H1 (cell line): ENCODE measurements at regions of chr5 and their contacts with region 1.

Region 1: GRCh38 chr5:129767906-129768380 is 20.0 kb downstream of the MINAR2 start:
- DNase-seq: peak; percentile 25 to 76
- H3K4me3 ChIP-seq: no peak overlapping the region
- H3K27ac ChIP-seq: no peak overlapping the region
- H3K4me1 ChIP-seq: peaks cover 0 to 7% (median 0%) of the 10 kb centered on the region in 4 experiments; a peak in 2 of 7 replicates
- H3K27me3 ChIP-seq: no peaks in the 10 kb centered on the region; a peak in 1 of 7 replicates
- CTCF ChIP-seq: peak in 2 of 3 experiments; percentile 97 to 99; a peak in 3 of 4 replicates
- EP300 ChIP-seq: no peak
- POLR2A ChIP-seq: no peak
- RAD21 ChIP-seq: peak; percentile 96 to 98

Region 2: GRCh38 chr5:129664337-129664937 is 103.5 kb before region 1 on chr5:
- CTCF ChIA-PET with region 1: interaction called, 17 read pairs
- POLR2A ChIA-PET with region 1: interaction called, 3 read pairs
- DNase-seq: peak in 1 of 2 experiments; percentile 66
- H3K4me3 ChIP-seq: no peak overlapping the region
- H3K27ac ChIP-seq: no peak overlapping the region
- H3K4me1 ChIP-seq: no peaks in the 10 kb centered on the region
- H3K27me3 ChIP-seq: no peaks in the 10 kb centered on the region
- CTCF ChIP-seq: peak in 2 of 3 experiments; percentile 45 to 68; a peak in 2 of 4 replicates
- EP300 ChIP-seq: no peak
- POLR2A ChIP-seq: no peak
- RAD21 ChIP-seq: peak; percentile 42 to 59

Region 3: DNA sequence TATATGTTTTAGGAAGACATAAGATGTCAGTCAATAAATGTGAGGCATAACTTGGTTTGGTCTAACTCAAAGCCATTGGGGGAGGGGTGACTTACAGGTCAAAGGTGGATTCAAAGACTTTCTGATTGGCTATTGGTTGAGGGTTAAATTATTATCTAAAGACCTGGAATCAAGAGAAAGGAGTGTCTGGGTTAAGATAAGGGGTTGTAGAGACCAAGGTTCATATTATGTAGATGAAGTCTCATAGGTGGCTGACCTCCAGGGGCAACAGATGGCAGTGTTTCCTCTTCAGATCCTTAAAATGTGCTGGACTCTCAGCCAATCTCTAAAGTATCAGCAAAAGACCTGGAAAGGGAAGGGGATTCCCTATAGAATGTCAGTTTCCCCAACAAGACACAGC is 71.3 kb before region 1 on chr5:
- CTCF ChIA-PET with region 1: interaction called, 19 read pairs
- POLR2A ChIA-PET with region 1: no interaction called
- DNase-seq: no peak
- H3K4me3 ChIP-seq: no peak overlapping the region
- H3K27ac ChIP-seq: no peak overlapping the region
- H3K4me1 ChIP-seq: no peaks in the 10 kb centered on the region
- H3K27me3 ChIP-seq: peaks cover 0 to 1% (median 0%) of the 10 kb centered on the region in 4 experiments; a peak in 1 of 7 replicates
- CTCF ChIP-seq: peak in 1 of 3 experiments; percentile 16; a peak in 2 of 4 replicates
- EP300 ChIP-seq: no peak
- POLR2A ChIP-seq: no peak
- RAD21 ChIP-seq: peak in 1 of 2 experiments; percentile 34; a peak in 2 of 4 replicates

Region 4: DNA sequence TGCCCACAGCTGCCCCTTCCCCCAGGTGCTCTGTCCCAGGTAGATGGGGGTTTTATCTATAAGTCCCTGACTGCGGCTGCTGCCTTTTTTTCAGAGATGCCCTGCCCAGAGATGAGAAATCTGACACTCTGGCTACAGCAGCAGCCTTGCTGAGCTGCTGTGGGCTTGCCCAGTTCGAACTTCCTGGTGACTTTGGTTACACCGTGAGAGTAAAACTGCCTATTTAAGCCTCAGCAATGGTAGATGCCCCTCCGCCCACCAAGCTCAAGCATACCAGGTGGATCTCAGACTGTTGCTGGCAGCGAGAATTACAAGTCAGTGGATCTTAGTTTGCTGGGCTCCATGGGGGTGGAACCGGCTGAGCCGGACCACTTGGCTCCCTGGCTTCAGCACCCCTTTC is 36.8 kb after region 1 on chr5:
- CTCF ChIA-PET with region 1: interaction called, 17 read pairs
- POLR2A ChIA-PET with region 1: no interaction called
- DNase-seq: no peak
- H3K4me3 ChIP-seq: no peak overlapping the region
- H3K27ac ChIP-seq: no peak overlapping the region
- H3K4me1 ChIP-seq: no peaks in the 10 kb centered on the region
- H3K27me3 ChIP-seq: no peaks in the 10 kb centered on the region
- CTCF ChIP-seq: no peak
- EP300 ChIP-seq: no peak
- POLR2A ChIP-seq: no peak
- RAD21 ChIP-seq: no peak

Region 5: GRCh38 chr5:129844764-129845163 is 76.8 kb after region 1 on chr5:
- CTCF ChIA-PET with region 1: interaction called, 290 read pairs
- POLR2A ChIA-PET with region 1: no interaction called
- DNase-seq: no peak
- H3K4me3 ChIP-seq: no peak overlapping the region
- H3K27ac ChIP-seq: no peak overlapping the region
- H3K4me1 ChIP-seq: no peaks in the 10 kb centered on the region
- H3K27me3 ChIP-seq: no peaks in the 10 kb centered on the region
- CTCF ChIP-seq: no peak
- EP300 ChIP-seq: no peak
- POLR2A ChIP-seq: no peak
- RAD21 ChIP-seq: no peak

Region 6: GRCh38 chr5:129852747-129853352 is 84.9 kb after region 1 on chr5:
- CTCF ChIA-PET with region 1: interaction called, 290 read pairs
- POLR2A ChIA-PET with region 1: interaction called, 5 read pairs
- DNase-seq: peak; percentile 41 to 94
- H3K4me3 ChIP-seq: no peak overlapping the region
- H3K27ac ChIP-seq: no peak overlapping the region
- H3K4me1 ChIP-seq: no peaks in the 10 kb centered on the region
- H3K27me3 ChIP-seq: no peaks in the 10 kb centered on the region
- CTCF ChIP-seq: peak; percentile 88 to 91 (median 89)
- EP300 ChIP-seq: no peak
- POLR2A ChIP-seq: no peak
- RAD21 ChIP-seq: peak; percentile 93 to 96

Region 7: GRCh38 chr5:130141659-130142320 is 373.8 kb after region 1 on chr5:
- CTCF ChIA-PET with region 1: interaction called, 33 read pairs
- POLR2A ChIA-PET with region 1: no interaction called
- DNase-seq: peak; percentile 17 to 70
- H3K4me3 ChIP-seq: no peak overlapping the region
- H3K27ac ChIP-seq: no peak overlapping the region
- H3K4me1 ChIP-seq: no peaks in the 10 kb centered on the region
- H3K27me3 ChIP-seq: no peaks in the 10 kb centered on the region
- CTCF ChIP-seq: peak; percentile 70 to 83 (median 81)
- EP300 ChIP-seq: no peak
- POLR2A ChIP-seq: no peak
- RAD21 ChIP-seq: peak; percentile 89 to 90